GM12878 (cell line): ENCODE measurements at regions of chr12 and their contacts with region 1.

Region 1: DNA sequence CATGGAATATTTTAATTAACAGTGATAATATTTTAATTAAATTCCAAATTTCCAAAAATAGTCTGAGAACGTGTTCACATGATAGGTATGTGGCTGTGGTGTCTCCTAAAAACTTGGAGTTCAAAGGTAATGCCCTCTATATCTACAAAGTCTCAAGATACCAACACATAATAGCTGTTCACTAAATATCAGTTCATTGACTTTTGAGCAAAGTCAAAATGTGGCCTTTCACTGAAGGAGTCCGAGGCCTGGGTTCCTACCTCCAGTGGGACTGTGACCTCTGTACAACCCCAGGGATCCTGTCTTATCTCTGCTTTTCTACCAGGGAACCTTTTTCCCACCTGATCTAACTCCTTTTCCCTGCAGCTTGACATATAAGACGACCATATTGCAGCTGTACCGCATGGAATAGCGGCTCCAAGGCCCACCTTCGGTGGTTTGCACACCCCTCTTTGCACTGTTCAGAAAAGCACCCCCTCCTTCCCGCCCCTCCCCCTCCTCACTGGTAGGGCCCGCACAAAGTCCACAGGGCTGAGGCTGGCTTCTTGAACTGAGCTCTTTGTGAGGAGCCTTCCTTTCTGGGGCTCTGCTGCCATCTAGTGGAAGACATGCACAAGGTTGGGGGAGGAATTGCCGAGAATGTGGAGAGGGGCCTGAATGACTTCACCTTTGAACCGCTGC is 3.1 kb downstream of the CCND2 start:
- DNase-seq: peak; percentile 78
- ATAC-seq: peak; percentile 48
- H3K4me3 ChIP-seq: peak overlapping the region; percentile 99
- H3K27ac ChIP-seq: peak overlapping the region; percentile 2; the same call in 1 of the 2 replicates
- H3K4me1 ChIP-seq: peaks cover 26% of the 10 kb centered on the region
- H3K27me3 ChIP-seq: no peaks in the 10 kb centered on the region
- CTCF ChIP-seq: peak; percentile 84 to 93 (median 85)
- EP300 ChIP-seq: no peak
- POLR2A ChIP-seq: 0 out of 2 replicates have a peak, but pooled peaks have one; percentile 42
- RAD21 ChIP-seq: peak; percentile 100

Region 2: GRCh38 chr12:3885277-3886094 is 391.2 kb before region 1 on chr12:
- CTCF ChIA-PET with region 1: interaction called, 58 read pairs
- POLR2A ChIA-PET with region 1: no interaction called
- RAD21 ChIA-PET with region 1: interaction called, 33 read pairs
- SMC1A ChIA-PET with region 1: interaction called, 36 read pairs
- in situ Hi-C with region 1: loop called (anchors 5 kb)
- intact Hi-C with region 1: loop called (anchors 1 kb)
- DNase-seq: no peak
- ATAC-seq: peak; percentile 36; the same call in 2 of the 3 replicates
- H3K4me3 ChIP-seq: 0 out of 2 replicates have a peak overlapping the region, but pooled peaks have one; percentile 5
- H3K27ac ChIP-seq: no peak overlapping the region
- H3K4me1 ChIP-seq: no peaks in the 10 kb centered on the region
- H3K27me3 ChIP-seq: no peaks in the 10 kb centered on the region; a peak in 1 of 4 replicates
- CTCF ChIP-seq: peak; percentile 74 to 82 (median 80)
- EP300 ChIP-seq: no peak
- POLR2A ChIP-seq: no peak
- RAD21 ChIP-seq: peak; percentile 91

Region 3: GRCh38 chr12:3998968-3999826 is 277.5 kb before region 1 on chr12:
- CTCF ChIA-PET with region 1: interaction called, 20 read pairs
- POLR2A ChIA-PET with region 1: interaction called, 4 read pairs
- RAD21 ChIA-PET with region 1: interaction called, 31 read pairs
- SMC1A ChIA-PET with region 1: interaction called, 91 read pairs
- in situ Hi-C with region 1: loop called (anchors 5 kb)
- intact Hi-C with region 1: loop called (anchors 1 kb)
- DNase-seq: no peak
- ATAC-seq: no peak
- H3K4me3 ChIP-seq: no peak overlapping the region
- H3K27ac ChIP-seq: no peak overlapping the region
- H3K4me1 ChIP-seq: no peaks in the 10 kb centered on the region
- H3K27me3 ChIP-seq: peaks cover 0 to 7% of the 10 kb centered on the region in 2 experiments; a peak in 2 of 4 replicates
- CTCF ChIP-seq: no peak
- EP300 ChIP-seq: no peak
- POLR2A ChIP-seq: no peak
- RAD21 ChIP-seq: no peak

Region 4: DNA sequence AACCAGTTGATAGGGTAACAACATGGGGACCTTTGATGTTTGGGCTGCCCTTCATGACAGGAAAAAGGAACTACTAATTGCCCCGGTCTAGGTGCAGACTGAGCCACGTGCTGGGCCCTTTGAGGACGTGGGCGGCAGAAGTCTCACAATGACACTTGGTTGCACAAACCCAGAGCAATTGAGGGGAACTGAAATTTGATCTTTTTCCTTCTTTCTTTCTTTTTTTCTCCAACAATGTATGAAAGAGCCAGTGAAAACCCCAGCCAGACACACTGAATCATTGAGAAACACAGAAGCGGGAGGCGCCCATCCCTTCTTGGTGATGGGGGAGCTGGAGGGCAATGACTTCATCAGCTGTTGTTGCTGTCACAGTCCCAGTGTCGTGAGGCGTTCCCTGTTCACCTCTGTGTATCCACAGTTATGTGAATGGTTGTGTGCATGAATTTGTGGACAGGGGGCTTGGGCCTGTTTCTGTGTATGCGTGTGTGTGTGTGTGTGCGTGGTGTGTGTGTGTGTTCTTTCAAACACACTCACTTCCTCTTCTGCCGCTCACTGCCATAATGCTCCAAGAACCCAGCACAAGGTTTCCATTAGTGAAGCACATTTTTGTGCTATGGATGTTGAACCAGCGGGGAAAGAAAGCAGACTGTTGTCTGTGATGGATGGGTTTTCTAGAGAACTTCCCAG is 140.6 kb before region 1 on chr12:
- CTCF ChIA-PET with region 1: interaction called, 181 read pairs
- POLR2A ChIA-PET with region 1: interaction called, 180 read pairs
- RAD21 ChIA-PET with region 1: interaction called, 171 read pairs
- SMC1A ChIA-PET with region 1: interaction called, 344 read pairs
- in situ Hi-C with region 1: loop called (anchors 10 kb)
- intact Hi-C with region 1: no loop called
- DNase-seq: peak; percentile 94
- ATAC-seq: peak; percentile 88
- H3K4me3 ChIP-seq: peak overlapping the region; percentile 55; the same call in 1 of the 2 replicates
- H3K27ac ChIP-seq: peak overlapping the region; percentile 64
- H3K4me1 ChIP-seq: peaks cover 65% of the 10 kb centered on the region
- H3K27me3 ChIP-seq: no peaks in the 10 kb centered on the region
- CTCF ChIP-seq: no peak
- EP300 ChIP-seq: peak; percentile 85 to 87; a peak in 3 of 4 replicates
- POLR2A ChIP-seq: no peak
- RAD21 ChIP-seq: no peak

Region 5: GRCh38 chr12:4261655-4262054 is 15.0 kb before region 1 on chr12:
- CTCF ChIA-PET with region 1: interaction called, 24 read pairs
- POLR2A ChIA-PET with region 1: interaction called, 16 read pairs
- RAD21 ChIA-PET with region 1: interaction called, 33 read pairs
- SMC1A ChIA-PET with region 1: interaction called, 9 read pairs
- in situ Hi-C with region 1: no loop called
- intact Hi-C with region 1: no loop called
- DNase-seq: peak; percentile 64
- ATAC-seq: peak; percentile 96
- H3K4me3 ChIP-seq: no peak overlapping the region
- H3K27ac ChIP-seq: peak overlapping the region; percentile 80
- H3K4me1 ChIP-seq: peaks cover 15% of the 10 kb centered on the region
- H3K27me3 ChIP-seq: no peaks in the 10 kb centered on the region
- CTCF ChIP-seq: no peak
- EP300 ChIP-seq: no peak
- POLR2A ChIP-seq: no peak
- RAD21 ChIP-seq: no peak

Region 6: GRCh38 chr12:4402996-4403395 is 126.3 kb after region 1 on chr12:
- CTCF ChIA-PET with region 1: no interaction called
- POLR2A ChIA-PET with region 1: no interaction called
- RAD21 ChIA-PET with region 1: no interaction called
- SMC1A ChIA-PET with region 1: no interaction called
- in situ Hi-C with region 1: no loop called
- intact Hi-C with region 1: no loop called
- DNase-seq: no peak
- ATAC-seq: no peak
- H3K4me3 ChIP-seq: no peak overlapping the region
- H3K27ac ChIP-seq: no peak overlapping the region
- H3K4me1 ChIP-seq: no peaks in the 10 kb centered on the region
- H3K27me3 ChIP-seq: no peaks in the 10 kb centered on the region; a peak in 2 of 4 replicates
- CTCF ChIP-seq: no peak
- EP300 ChIP-seq: no peak
- POLR2A ChIP-seq: no peak
- RAD21 ChIP-seq: no peak